ENCODE measurements at regions of chr7 and their contacts with region 1.

Region 1: DNA sequence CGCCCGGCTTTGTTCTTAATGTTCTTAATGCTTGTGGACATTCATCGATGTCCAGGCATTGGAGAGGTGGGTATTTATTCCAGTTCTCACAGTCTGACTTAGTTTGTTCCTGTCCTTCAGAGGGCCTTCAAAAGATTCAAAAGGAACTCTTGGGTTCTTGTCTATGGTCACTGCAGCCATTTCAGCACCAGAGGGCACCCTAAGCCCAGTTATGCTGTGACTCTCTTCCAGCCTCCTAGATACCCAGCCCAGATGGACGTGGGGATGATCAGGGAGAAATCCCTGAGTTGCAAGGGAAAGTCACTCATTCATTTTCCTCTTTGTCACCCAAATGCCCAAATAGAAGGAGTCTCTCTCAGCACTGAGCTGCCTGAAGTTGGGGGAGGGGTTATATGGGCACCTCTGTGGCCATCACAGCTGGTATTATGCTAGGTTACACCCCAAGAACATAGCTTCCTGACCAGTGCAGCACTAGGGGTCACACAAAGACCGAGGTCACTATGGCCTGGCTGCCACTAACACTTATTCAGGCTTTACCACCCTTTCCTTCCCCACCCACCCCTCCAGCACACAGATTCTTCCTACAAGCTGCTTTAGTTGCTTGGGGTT is 26.5 kb upstream of the CCDC126 start:
- DNase-seq: no peak
- H3K4me3 ChIP-seq: no peak overlapping the region
- H3K27ac ChIP-seq: no peak overlapping the region
- H3K4me1 ChIP-seq: no peaks in the 10 kb centered on the region
- H3K27me3 ChIP-seq: peaks cover 0 to 8% (median 0%) of the 10 kb centered on the region in 4 donors
- CTCF ChIP-seq: peak; percentile 44 to 88 (median 82)
- POLR2A ChIP-seq: no peak

Region 2: DNA sequence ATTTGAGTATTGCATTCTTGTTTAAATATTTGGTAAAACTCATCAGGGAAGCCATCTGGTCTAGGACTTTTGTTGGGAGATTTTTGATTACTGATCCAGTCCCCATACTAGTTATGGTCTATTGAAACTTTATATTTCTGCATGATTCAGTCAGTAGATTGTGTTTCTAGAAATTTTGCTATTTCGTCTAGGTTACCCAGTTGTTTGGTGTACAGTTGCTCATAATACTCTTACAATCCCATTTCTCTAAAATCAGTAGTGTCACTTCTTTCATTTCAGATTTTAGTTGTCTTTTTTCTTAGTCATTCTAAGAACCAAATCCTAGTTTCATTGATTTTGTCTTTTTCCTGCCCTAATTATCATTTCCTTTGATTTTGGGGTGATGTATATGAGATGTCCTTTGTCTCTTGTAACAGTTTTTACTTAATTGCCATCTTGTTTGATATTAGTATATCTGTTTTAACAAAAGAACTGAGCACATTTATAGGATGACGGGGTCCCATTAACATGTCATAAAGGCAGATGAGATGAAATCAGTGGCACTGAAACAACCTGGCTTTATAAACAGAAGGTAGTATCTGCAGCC is 263.7 kb before region 1 on chr7:
- intact Hi-C with region 1: no loop called
- DNase-seq: no peak
- H3K4me3 ChIP-seq: no peak overlapping the region
- H3K27ac ChIP-seq: no peak overlapping the region
- H3K4me1 ChIP-seq: peaks cover 0 to 14% (median 0%) of the 10 kb centered on the region in 3 donors
- H3K27me3 ChIP-seq: no peaks in the 10 kb centered on the region
- CTCF ChIP-seq: no peak
- POLR2A ChIP-seq: no peak

Region 3: GRCh38 chr7:23712368-23713284 is 141.9 kb after region 1 on chr7:
- intact Hi-C with region 1: loop called (anchors 10 kb)
- DNase-seq: no peak
- H3K4me3 ChIP-seq: no peak overlapping the region
- H3K27ac ChIP-seq: no peak overlapping the region
- H3K4me1 ChIP-seq: no peaks in the 10 kb centered on the region
- H3K27me3 ChIP-seq: no peaks in the 10 kb centered on the region
- CTCF ChIP-seq: peak in 5 of 6 experiments; percentile 34 to 67 (median 49)
- POLR2A ChIP-seq: no peak

Region 4: DNA sequence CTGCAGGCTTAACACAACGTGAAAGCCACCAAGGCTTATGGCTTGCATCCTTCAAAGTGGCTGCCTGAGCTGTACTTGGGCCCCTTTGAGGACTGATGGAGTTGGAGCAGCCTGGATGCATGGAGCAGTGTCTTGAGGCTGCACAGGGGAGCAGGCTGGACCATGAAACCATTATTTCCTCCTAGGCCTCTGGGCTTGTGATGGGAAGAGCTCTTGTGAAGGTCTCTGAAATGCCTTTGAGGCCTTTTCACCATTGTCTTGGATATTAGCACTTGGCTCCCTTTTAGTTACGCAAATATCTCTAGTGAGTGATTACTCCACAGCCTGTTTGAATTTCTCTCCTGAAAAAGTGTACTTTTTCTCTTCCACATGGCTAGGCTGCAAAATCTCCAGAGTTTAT is 512.1 kb after region 1 on chr7:
- intact Hi-C with region 1: no loop called
- DNase-seq: no peak
- H3K4me3 ChIP-seq: no peak overlapping the region
- H3K27ac ChIP-seq: no peak overlapping the region
- H3K4me1 ChIP-seq: no peaks in the 10 kb centered on the region
- H3K27me3 ChIP-seq: no peaks in the 10 kb centered on the region
- CTCF ChIP-seq: no peak
- POLR2A ChIP-seq: no peak

Region 5: GRCh38 chr7:24665564-24666294 is 1095.0 kb after region 1 on chr7:
- intact Hi-C with region 1: loop called (anchors 10 kb)
- DNase-seq: no peak
- H3K4me3 ChIP-seq: no peak overlapping the region
- H3K27ac ChIP-seq: no peak overlapping the region
- H3K4me1 ChIP-seq: peaks cover 0 to 5% (median 0%) of the 10 kb centered on the region in 3 donors
- H3K27me3 ChIP-seq: no peaks in the 10 kb centered on the region
- CTCF ChIP-seq: peak; percentile 30 to 68 (median 62)
- POLR2A ChIP-seq: no peak

Measured in esophagus squamous epithelium (tissue), 5 donors.